A549 (cell line): ENCODE measurements at regions of chr7 and their contacts with region 1.

Region 1: GRCh38 chr7:95476904-95477594 is 8.7 kb upstream of the ASB4 start:
- DNase-seq: peak; percentile 60 to 89
- ATAC-seq: peak; percentile 49 to 54; a peak in 4 of 6 replicates
- H3K4me3 ChIP-seq: no peak overlapping the region
- H3K27ac ChIP-seq: peak overlapping the region; percentile 92 to 94
- H3K4me1 ChIP-seq: peaks cover 40% of the 10 kb centered on the region
- CTCF ChIP-seq: peak; percentile 97
- EP300 ChIP-seq: no peak
- POLR2A ChIP-seq: no peak
- RAD21 ChIP-seq: peak; percentile 98

Region 2: DNA sequence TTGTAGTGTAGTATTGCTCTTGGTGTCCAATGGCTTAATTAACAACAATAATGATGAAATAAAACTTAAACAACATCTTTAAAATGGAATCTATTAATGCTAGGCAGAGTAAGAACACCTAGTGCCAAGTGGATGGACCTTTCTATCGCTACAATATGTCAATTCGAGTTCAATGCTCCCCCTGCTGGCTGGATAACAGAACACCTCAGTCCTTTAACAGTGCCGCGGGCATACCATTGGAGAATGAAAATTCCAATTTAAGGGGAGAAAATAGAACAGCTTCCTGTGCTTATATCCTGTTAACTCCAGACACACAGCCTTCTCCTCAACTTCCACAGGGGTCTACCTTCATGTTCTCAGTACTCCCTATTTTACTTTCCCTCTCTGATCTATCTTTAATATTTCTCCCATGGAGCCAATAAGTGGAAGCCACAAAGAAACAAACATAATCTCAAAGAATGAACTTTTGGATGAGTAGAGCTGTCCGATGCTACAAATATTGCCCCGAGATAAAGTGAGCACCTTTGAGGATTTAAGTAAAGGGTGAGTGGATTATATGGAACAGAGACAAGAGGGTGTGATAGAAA is 1040.9 kb before region 1 on chr7:
- CTCF ChIA-PET with region 1: interaction called, 12 read pairs
- POLR2A ChIA-PET with region 1: no interaction called
- DNase-seq: peak; percentile 59 to 76
- ATAC-seq: peak; percentile 94 to 97; a peak in 5 of 6 replicates
- H3K4me3 ChIP-seq: no peak overlapping the region
- H3K27ac ChIP-seq: 0 out of 6 replicates have a peak overlapping the region, but pooled peaks of 1 of the 2 experiments have one; percentile 45
- H3K4me1 ChIP-seq: peaks cover 10% of the 10 kb centered on the region; the same call in 1 of the 3 replicates
- CTCF ChIP-seq: peak; percentile 90
- EP300 ChIP-seq: no peak
- POLR2A ChIP-seq: no peak
- RAD21 ChIP-seq: peak; percentile 87

Region 3: DNA sequence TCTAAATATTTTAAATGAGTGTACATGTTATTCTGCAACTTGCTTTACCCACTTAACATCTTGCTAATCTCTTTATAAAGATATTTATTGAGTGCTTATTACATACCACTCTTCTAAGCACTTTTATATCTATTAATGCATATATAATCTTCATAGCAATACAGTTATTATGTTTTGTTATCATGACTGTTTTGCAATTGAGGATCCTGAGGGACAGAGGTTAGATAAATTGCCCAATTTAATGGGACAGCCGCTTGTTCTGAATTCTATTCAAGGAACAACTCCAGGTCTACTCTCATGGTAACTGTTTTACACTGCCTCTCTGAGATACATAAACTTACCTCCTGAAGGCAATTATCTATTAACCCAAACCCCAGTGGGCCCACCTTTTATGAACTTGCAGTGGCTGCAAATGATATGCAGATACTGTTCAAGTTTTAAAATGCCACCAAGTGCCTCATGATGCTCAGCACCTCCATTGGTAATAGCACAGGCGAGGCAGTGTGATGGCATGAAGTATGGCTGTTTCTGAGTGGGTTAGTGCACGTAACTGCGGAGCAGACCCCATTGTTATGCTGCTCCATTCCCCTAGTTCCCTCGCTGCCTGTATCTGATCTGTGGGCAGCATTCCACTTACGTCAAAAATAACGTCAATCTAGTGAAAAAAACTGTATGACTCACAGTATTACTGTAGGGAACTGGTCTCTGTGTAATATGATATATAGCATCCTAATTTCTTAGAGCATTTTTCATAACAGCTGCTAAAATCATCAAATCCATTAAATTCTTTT is 213.1 kb before region 1 on chr7:
- CTCF ChIA-PET with region 1: interaction called, 23 read pairs
- POLR2A ChIA-PET with region 1: no interaction called
- DNase-seq: peak; percentile 64 to 96
- ATAC-seq: peak; percentile 96 to 97
- H3K4me3 ChIP-seq: no peak overlapping the region; the same call in 2 of the 3 replicates
- H3K27ac ChIP-seq: peak overlapping the region; percentile 97 to 100
- H3K4me1 ChIP-seq: peaks cover 58% of the 10 kb centered on the region
- CTCF ChIP-seq: no peak
- EP300 ChIP-seq: peak; percentile 95 to 96
- POLR2A ChIP-seq: no peak
- RAD21 ChIP-seq: peak in 1 of 2 experiments; percentile 58; a peak in 3 of 5 replicates

Region 4: GRCh38 chr7:95396136-95397032 is 80.7 kb before region 1 on chr7 and contains the start of gene PON3:
- CTCF ChIA-PET with region 1: interaction called, 176 read pairs
- POLR2A ChIA-PET with region 1: interaction called, 26 read pairs
- DNase-seq: peak; percentile 89 to 91
- ATAC-seq: peak; percentile 89 to 90
- H3K4me3 ChIP-seq: peak within 1 kb of the TSS; percentile 62
- H3K27ac ChIP-seq: peak within 1 kb of the TSS; percentile 90 to 97
- H3K4me1 ChIP-seq: peaks cover 56% of the 10 kb centered on the region
- CTCF ChIP-seq: peak; percentile 83
- EP300 ChIP-seq: no peak
- POLR2A ChIP-seq: peak; percentile 36; the same call in 1 of the 2 replicates
- RAD21 ChIP-seq: peak; percentile 65 to 68
- polyA plus RNA-seq, gene PON3: 142 and 161 TPM in 2 replicates

Region 5: DNA sequence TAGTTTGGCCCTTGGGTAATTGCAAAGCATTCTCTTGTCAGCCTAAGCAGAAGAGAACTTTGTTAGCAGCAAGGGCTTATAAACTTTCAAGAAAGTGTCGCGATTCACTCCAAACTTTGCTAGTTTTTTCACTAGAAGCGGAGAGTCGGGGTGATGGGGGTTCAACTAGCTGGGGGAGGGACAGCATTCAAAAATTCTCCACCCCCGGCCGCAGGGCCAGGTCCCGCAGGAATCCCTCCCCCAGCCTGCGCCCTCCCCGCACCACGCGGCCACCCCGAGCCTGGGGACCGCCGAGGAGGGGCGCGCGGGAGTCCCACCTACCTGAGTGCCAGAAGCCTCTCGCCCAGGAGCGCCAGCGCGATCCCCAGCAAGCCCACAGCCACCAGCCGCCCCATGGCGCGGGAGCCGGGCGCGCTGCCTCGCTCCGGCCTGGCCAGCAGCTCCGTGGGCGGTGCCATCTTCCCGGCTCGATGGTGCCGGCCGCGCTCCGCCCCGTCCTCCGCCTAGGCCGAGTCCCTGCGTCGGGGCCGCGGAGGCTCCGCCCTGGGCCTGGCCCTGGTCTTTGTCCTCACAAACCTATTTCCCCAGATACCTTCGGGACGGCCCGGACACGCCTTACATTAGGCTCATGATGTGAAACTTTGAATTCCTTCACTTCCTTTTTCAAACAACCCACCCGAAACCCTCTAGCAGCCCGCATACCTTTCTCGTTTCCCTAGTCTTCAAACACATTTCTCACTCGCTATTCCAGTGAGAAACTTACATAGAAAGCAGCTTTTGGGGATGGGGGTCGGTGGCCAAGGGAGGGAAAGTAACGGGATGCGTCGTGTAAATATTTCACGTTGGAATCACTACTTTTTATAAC is 42.3 kb before region 1 on chr7 and contains the start of gene PON2:
- CTCF ChIA-PET with region 1: interaction called, 32 read pairs
- POLR2A ChIA-PET with region 1: interaction called, 20 read pairs
- DNase-seq: peak; percentile 79 to 97
- ATAC-seq: peak; percentile 94 to 95
- H3K4me3 ChIP-seq: peak within 1 kb of the TSS; percentile 65
- H3K27ac ChIP-seq: peak within 1 kb of the TSS; percentile 96 to 98
- H3K4me1 ChIP-seq: peaks cover 81% of the 10 kb centered on the region
- CTCF ChIP-seq: no peak
- EP300 ChIP-seq: peak; percentile 10 to 71; a peak in 2 of 5 replicates
- POLR2A ChIP-seq: peak; percentile 88
- RAD21 ChIP-seq: no peak; a peak in 1 of 5 replicates
- polyA plus RNA-seq, gene PON2: 829 TPM in 2 replicates

Region 6: GRCh38 chr7:95511716-95512260 is 34.7 kb after region 1 on chr7:
- CTCF ChIA-PET with region 1: interaction called, 32 read pairs
- POLR2A ChIA-PET with region 1: no interaction called
- DNase-seq: peak; percentile 53 to 85
- ATAC-seq: peak; percentile 94 to 99
- H3K4me3 ChIP-seq: no peak overlapping the region
- H3K27ac ChIP-seq: peak overlapping the region; percentile 54 to 74
- H3K4me1 ChIP-seq: peaks cover 5% of the 10 kb centered on the region; the same call in 1 of the 3 replicates
- CTCF ChIP-seq: peak; percentile 80
- EP300 ChIP-seq: no peak
- POLR2A ChIP-seq: no peak
- RAD21 ChIP-seq: peak; percentile 73 to 77

Region 7: GRCh38 chr7:95553939-95554338 is 76.9 kb after region 1 on chr7:
- CTCF ChIA-PET with region 1: no interaction called
- POLR2A ChIA-PET with region 1: no interaction called
- DNase-seq: no peak
- ATAC-seq: no peak
- H3K4me3 ChIP-seq: no peak overlapping the region
- H3K27ac ChIP-seq: no peak overlapping the region
- H3K4me1 ChIP-seq: peaks cover 13% of the 10 kb centered on the region
- CTCF ChIP-seq: no peak
- EP300 ChIP-seq: no peak
- POLR2A ChIP-seq: no peak
- RAD21 ChIP-seq: no peak